ENCODE measurements at regions of chr2 and their contacts with region 1.

Region 1: DNA sequence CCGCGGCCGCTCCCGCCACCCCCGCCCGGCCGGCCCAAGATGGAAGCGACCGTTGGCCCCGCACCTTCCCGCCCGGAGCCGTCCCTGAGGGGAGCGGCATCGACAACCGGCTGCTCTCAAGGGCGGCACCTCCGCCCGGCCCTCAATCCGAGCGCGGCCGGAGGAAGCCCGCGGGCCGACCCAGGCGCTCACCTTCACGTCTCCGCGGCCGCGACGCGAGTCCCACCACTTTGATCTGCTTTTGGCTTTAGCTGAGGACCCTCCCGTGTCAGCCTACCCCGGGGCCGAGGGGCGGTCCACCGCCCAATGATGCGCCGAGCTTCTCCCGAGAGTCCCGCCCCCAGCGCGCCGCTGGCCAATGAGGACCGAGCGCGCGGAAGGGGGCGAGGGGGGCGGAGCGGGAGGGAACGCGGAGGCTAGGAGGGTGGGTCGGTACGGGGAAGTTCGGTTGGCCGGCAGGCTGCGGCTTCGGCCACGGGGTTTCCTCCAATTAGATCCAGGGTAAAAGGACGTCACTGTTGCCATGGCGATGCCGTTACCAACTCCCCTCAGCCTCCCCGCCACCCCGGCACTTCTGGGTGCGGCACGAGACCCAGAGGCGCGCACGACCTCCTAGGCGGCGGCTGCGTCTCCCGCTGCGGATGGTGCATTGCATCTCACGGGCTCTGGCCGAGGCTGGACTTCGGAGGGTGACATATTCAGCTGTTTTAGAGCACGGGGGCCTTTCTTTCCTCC is at the start of gene YWHAQ:
- DNase-seq: peak; percentile 97 to 100 (median 98)

Region 2: DNA sequence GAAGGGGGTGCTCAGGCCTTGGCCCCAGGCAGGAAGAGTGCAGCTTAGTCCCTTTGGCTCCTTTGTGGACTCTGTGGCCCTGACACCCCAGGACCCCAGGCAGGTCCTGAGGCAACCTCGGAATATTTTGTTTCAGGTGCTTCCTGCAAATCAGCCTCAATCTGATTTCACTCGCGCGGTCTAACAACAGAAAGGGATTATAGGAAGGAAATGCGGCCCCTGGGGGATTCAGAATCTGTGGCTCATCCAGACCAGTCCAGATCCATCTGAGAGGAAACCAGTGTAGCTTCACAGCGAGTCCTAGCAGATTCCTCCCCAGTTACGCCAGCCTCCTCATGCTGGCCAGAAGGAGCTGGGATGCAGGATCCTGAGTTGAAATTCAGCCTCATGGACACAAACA is 59.3 kb after region 1 on chr2:
- intact Hi-C with region 1: no loop called
- DNase-seq: peak in 1 of 10 donors; percentile 40

Region 3: DNA sequence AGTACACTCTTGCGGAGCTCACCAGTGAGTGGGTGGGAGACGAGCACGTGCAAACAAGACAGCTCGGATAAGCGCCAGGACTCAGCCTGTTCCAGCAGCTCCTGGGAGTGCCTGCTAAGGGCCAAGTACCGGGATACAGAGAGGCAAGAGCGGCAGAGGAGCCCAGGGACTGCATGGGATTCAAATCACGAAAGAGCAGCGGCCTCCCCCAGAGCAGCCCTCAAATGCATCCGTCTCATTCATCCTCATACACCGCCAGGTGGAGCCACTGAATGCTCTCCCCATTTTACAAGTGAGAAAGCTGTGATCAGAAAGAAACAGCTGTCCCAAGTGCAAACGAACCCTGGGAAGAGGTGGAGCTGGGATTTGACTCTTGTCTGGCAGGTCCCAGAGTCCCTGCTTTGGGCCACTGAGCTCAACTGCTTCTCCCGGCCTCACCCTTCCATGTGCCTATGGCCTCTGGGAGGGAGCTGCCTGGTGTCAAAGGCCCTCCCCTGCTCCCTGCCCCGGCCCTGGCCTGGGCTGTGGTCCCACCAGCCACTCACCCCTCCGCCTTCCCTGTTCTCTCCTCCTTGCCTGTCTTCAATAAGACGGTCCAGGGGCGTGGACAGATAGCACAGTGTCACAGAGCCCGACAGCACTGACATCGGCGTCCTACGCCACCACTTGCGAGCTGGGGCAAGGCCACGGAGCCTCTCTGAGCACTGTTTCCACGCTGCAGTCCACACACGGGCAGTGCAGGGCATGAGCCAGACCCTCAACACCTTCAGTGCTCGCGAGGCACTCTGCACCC is 139.6 kb after region 1 on chr2:
- intact Hi-C with region 1: loop called (anchors 10 kb)
- DNase-seq: peak; percentile 53 to 96 (median 80)

Measured in posterior cingulate gyrus (tissue), 11 donors.